ENCODE measurements at regions of chr1 and their contacts with region 1.

Region 1: GRCh38 chr1:226186124-226187018 is at the start of gene ACBD3:
- DNase-seq: peak; percentile 94 to 95
- ATAC-seq: peak; percentile 94
- H3K4me3 ChIP-seq: peak within 1 kb of the TSS; percentile 84 to 90
- H3K27ac ChIP-seq: peak within 1 kb of the TSS; percentile 34 to 81
- H3K4me1 ChIP-seq: peaks cover 0 to 3% of the 10 kb centered on the region in 2 donors
- H3K27me3 ChIP-seq: no peaks in the 10 kb centered on the region
- total RNA-seq, gene ACBD3: 41.6 to 45.5 TPM

Region 2: GRCh38 chr1:226054519-226055327 is 131.6 kb before region 1 on chr1:
- intact Hi-C with region 1: no loop called
- DNase-seq: no peak
- ATAC-seq: no peak
- H3K4me3 ChIP-seq: no peak overlapping the region
- H3K27ac ChIP-seq: peak overlapping the region in 1 of 2 donors; percentile 28
- H3K4me1 ChIP-seq: no peaks in the 10 kb centered on the region
- H3K27me3 ChIP-seq: no peaks in the 10 kb centered on the region

Region 3: DNA sequence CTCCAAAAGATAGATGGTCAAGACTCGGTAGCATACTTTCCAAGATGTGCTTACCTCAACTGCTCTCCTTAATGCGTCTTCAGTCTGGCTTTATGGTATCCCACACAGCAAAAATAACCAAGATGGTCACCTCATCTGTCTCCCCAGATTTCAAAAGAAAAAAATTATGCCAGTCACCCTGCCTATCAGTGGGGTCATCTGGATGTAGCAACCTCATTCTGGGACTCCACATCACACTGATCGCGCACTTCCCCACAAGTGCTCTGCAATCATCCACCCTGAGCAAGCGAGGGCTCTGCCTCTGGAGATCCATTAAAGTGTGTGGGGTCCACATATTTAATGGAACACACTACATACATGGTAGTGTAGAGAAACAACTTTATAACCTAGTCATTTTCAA is 42.3 kb before region 1 on chr1:
- intact Hi-C with region 1: loop called in 1 of 2 experiments (anchors 5 kb)
- DNase-seq: no peak
- ATAC-seq: no peak
- H3K4me3 ChIP-seq: no peak overlapping the region
- H3K27ac ChIP-seq: no peak overlapping the region
- H3K4me1 ChIP-seq: no peaks in the 10 kb centered on the region
- H3K27me3 ChIP-seq: no peaks in the 10 kb centered on the region

Region 4: DNA sequence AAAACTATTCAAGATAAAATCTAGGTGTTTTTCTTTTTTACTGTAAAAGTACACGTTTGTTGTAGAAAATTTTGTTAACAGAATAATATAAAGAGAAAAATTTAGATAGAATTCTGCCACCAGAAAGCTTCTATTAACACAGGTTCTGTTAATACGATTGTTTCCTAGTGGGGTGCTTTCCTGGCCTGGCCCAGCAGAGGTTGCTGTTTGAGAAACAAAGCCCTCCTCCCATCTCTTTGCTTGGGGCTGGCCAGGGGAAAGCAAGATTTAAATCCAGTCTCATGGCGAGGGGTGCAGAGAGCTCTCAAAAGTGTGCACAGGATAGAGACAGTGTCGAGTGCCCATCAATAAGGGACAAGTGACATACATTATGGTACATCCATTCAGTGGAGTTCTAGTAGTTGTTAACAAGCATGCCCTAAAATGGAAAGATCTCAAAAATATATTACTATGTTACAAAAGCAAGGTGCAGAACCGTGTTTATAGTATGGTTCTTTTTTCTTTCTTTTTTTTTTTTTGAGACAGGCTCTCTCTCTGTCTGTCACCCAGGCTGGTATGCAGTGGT is 14.7 kb after region 1 on chr1:
- intact Hi-C with region 1: no loop called
- DNase-seq: no peak
- ATAC-seq: no peak
- H3K4me3 ChIP-seq: no peak overlapping the region
- H3K27ac ChIP-seq: no peak overlapping the region
- H3K4me1 ChIP-seq: no peaks in the 10 kb centered on the region
- H3K27me3 ChIP-seq: no peaks in the 10 kb centered on the region

Region 5: DNA sequence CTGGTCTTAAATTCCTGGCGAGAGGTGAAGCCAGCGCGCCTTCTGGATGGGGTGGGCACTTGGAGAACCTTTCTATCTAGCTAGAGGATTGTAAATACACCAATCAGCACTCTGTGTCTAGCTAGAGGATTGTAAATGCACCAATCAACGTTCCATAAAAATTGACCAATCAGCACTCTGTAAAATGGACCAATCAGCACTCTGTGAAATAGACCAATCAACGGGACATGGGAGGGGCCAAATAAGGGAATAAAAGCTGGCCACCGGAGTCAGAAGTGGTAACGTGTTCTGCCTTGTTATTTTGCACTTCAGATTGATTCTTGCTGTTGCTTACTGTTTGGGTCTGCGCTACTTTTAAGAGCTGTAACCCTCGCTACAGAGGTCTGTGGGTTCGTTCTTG is 134.6 kb after region 1 on chr1:
- intact Hi-C with region 1: no loop called
- DNase-seq: no peak
- ATAC-seq: no peak
- H3K4me3 ChIP-seq: no peak overlapping the region
- H3K27ac ChIP-seq: no peak overlapping the region
- H3K4me1 ChIP-seq: no peaks in the 10 kb centered on the region
- H3K27me3 ChIP-seq: no peaks in the 10 kb centered on the region

Measured in aorta (tissue), 5 donors.